ENCODE measurements at regions of chr17 and their contacts with region 1.

Region 1: DNA sequence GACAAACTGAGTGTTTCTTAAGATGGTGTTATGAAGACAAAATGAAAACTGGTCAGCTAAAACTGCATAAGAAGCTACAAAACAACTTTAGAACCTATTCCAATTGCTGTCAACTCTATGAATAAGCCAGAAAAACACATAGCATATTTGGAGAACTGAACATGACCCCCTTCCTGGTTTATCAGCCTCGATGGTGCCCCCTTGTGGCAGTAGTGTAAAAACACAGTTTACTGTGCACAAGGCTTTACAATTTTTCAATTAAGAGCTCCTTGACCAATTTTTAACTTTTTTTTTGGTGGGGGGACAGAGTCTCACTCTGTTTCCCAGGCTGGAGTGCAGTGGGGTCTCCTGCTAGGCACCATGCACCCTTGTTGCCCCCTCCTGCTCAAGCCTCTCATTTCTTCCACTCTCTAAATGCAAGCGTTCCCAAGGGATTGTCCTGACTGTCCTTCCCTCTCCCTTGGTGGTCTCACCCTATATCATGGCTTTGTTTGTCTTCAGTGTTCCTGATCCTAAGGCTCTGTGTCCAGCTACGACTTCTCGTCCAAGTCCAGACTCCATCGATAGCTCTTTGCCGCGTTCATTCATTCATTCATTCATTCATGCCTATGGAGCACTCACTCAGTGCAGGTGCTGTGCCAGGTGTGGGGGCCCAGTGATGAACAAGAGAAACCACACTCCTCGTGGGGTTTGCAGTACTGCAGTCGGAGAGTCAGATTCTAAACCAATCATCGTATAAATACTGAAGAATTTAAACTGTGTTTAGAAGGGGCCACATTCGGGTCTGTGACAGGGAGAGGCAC is 7.5 kb downstream of the EIF1 start:
- DNase-seq: peak; percentile 90 to 94
- ATAC-seq: peak; percentile 48 to 49
- H3K4me3 ChIP-seq: no peak overlapping the region
- H3K27ac ChIP-seq: no peak overlapping the region
- H3K4me1 ChIP-seq: peaks cover 24% of the 10 kb centered on the region
- CTCF ChIP-seq: peak; percentile 86
- EP300 ChIP-seq: no peak
- POLR2A ChIP-seq: no peak
- RAD21 ChIP-seq: peak; percentile 53 to 54; a peak in 4 of 5 replicates

Region 2: DNA sequence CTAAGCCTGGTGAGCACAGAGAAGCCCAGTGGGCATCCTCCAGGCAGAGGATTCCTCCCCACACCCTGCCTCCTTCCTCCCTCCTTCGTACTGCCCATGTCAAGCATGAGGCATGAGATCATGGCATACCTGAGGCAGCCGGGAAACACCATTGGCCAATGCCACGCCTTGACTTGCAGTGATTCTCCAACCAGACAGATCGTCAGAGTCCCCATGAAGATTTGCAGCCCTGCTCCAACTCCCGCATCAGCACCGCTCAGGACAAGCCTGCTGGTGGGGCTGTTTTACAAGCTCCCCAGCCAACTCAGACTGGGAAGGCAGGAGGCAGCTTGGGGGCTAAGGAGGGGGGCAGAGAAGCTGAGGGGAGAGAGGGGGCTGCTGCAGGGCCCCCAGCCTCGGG is 80.7 kb before region 1 on chr17:
- CTCF ChIA-PET with region 1: no interaction called
- POLR2A ChIA-PET with region 1: no interaction called
- DNase-seq: peak in 1 of 2 experiments; percentile 58
- ATAC-seq: no peak
- H3K4me3 ChIP-seq: no peak overlapping the region
- H3K27ac ChIP-seq: no peak overlapping the region
- H3K4me1 ChIP-seq: peaks cover 12% of the 10 kb centered on the region
- CTCF ChIP-seq: no peak
- EP300 ChIP-seq: no peak
- POLR2A ChIP-seq: no peak
- RAD21 ChIP-seq: no peak

Region 3: DNA sequence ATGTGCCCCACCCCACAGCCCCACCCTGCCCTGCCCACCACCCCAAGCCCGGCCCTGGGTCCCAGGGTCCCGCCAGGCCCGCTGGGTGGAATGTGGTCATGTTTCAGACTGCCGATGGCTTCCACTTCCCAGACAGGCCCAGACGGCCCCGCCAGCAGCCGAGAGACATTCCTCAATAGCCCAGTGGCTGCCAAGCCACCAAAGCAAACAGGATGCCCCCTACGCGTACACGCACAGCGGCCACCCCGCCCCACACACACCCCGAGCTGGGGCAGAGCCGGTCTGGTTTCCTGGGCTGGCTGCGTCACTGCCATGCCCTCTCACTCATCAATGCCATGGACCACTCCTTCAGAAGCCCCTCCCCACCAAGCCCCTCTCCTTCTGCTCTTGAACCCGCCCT is 70.6 kb before region 1 on chr17:
- CTCF ChIA-PET with region 1: no interaction called
- POLR2A ChIA-PET with region 1: no interaction called
- DNase-seq: peak in 1 of 2 experiments; percentile 33
- ATAC-seq: no peak
- H3K4me3 ChIP-seq: no peak overlapping the region
- H3K27ac ChIP-seq: no peak overlapping the region
- H3K4me1 ChIP-seq: peaks cover 9% of the 10 kb centered on the region; the same call in 2 of the 3 replicates
- CTCF ChIP-seq: no peak
- EP300 ChIP-seq: no peak
- POLR2A ChIP-seq: no peak
- RAD21 ChIP-seq: no peak

Region 4: DNA sequence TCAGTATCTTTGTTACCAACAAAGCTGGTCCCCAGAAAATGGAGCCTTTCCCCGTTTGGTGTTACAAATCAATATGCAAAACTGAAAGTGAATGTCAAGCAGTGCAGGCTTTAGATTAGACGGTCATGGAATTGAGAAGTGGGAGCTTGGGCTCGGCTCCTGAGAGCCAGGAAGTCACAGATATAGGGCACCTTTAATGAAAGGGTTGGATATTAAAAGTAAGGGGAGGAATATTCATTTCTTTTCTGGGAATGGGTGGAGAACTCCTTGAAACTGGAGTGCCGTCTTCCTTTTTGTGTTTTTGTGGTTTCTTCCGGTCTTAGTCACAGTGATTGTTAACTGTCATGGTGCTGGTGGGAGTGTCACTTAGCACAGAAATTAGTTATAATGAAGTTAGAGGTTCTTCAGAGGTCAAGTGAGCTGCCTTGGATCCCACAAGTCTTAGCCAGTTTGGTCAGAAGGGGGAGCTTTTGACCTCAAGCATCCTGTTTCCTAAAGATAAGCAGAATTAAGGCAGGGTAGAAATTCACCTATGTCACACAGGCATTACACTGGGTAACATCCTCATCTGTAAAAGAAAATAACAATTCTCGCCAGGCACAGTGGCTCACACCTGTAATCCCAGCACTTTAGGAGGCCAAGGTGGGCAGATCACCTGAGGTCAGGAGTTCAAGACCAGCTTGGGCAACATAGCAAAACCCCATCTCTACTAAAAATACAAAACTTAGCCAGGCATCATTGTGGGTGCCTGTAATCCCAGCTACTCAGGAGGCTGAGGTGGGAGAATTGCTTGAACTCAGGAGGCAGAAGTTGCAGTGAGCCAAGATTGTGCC is 17.0 kb before region 1 on chr17:
- CTCF ChIA-PET with region 1: interaction called, 329 read pairs
- POLR2A ChIA-PET with region 1: interaction called, 258 read pairs
- DNase-seq: peak in 1 of 2 experiments; percentile 80
- ATAC-seq: peak; percentile 35 to 47
- H3K4me3 ChIP-seq: peak overlapping the region; percentile 3; the same call in 1 of the 3 replicates
- H3K27ac ChIP-seq: peak overlapping the region; percentile 73 to 83
- H3K4me1 ChIP-seq: peaks cover 48% of the 10 kb centered on the region
- CTCF ChIP-seq: peak; percentile 42
- EP300 ChIP-seq: no peak
- POLR2A ChIP-seq: no peak
- RAD21 ChIP-seq: peak in 1 of 2 experiments; percentile 38; a peak in 3 of 5 replicates

Region 5: DNA sequence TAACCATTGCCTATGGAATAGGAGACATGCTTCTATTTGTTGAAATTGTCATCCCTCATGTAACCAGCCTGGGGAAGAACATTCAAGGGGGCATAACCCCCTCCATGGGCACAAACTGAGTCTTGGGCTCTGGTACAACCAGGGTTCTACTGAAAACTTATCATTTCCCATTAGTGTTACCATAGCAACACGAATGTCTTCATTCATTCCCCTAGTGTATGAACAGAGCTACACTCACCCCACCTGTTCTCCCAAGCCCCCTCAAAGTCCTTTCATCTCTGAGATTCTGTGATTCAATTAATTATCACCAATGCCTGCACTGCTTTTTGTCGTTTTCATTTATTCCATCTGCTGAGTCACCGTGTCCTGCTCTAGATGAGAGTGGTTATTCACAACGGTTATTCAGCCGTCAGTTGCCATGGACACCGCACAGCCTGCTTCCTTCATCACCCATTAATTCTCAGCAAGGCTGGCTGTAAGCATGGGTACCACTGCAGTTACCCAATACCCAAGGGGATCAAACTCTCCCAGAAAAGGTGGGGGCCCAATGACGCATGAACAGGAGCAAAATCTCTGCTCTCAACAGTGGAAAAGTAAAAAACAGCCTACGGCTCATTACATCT is 14.4 kb after region 1 on chr17:
- CTCF ChIA-PET with region 1: interaction called, 210 read pairs
- POLR2A ChIA-PET with region 1: interaction called, 9 read pairs
- DNase-seq: peak in 1 of 2 experiments; percentile 62
- ATAC-seq: peak; percentile 20 to 27; a peak in 2 of 6 replicates
- H3K4me3 ChIP-seq: no peak overlapping the region
- H3K27ac ChIP-seq: no peak overlapping the region
- H3K4me1 ChIP-seq: peaks cover 5% of the 10 kb centered on the region
- CTCF ChIP-seq: no peak
- EP300 ChIP-seq: no peak
- POLR2A ChIP-seq: no peak
- RAD21 ChIP-seq: no peak

Region 6: GRCh38 chr17:41724476-41725050 is 28.4 kb after region 1 on chr17:
- CTCF ChIA-PET with region 1: interaction called, 37 read pairs
- POLR2A ChIA-PET with region 1: no interaction called
- DNase-seq: no peak
- ATAC-seq: no peak
- H3K4me3 ChIP-seq: no peak overlapping the region
- H3K27ac ChIP-seq: no peak overlapping the region
- H3K4me1 ChIP-seq: no peaks in the 10 kb centered on the region
- CTCF ChIP-seq: no peak
- EP300 ChIP-seq: no peak
- POLR2A ChIP-seq: no peak
- RAD21 ChIP-seq: no peak

Region 7: DNA sequence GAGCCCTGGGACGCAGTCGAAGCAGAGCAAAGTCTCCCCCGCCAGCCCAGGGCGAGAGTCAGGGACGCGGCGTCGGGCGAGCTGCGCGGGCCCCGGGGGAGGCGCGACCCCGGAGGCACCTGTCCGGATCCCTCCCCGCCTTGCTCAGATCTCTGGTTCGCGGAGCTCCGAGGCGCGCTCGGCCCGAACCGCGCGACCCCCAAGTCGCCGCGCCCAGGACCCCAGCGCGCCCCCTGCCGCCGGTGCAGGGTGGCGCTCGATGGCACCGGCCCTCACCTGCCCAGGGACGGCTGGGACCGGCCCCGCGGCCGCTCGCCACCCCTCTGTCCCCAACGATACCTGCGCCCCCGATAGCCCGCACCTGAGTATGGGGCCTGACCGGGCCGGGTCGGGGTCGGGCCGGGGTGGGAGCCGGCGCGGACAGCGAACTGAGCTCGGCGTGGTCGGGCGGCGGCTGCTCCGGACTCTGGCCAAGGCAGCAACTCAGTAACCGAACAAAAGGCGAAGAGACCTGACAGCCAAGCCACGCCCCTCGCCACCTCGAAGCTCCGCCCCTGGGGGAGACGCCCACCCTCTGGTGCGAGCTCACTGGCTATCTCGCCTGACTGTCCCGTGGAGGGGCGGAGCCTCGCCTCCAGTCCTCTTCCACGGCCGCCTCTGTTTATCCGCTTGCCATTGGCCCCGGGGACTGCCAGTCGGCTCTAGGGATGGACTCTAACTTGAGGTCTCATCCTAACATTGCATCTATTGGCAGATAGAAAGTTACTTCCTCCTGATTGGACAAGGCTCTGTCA is 90.3 kb after region 1 on chr17 and contains the start of gene JUP:
- CTCF ChIA-PET with region 1: interaction called, 10 read pairs
- POLR2A ChIA-PET with region 1: no interaction called
- DNase-seq: peak; percentile 100
- ATAC-seq: peak; percentile 90 to 95
- H3K4me3 ChIP-seq: peak within 1 kb of the TSS; percentile 83
- H3K27ac ChIP-seq: peak within 1 kb of the TSS; percentile 86
- H3K4me1 ChIP-seq: peaks cover 43% of the 10 kb centered on the region
- CTCF ChIP-seq: peak; percentile 96
- EP300 ChIP-seq: no peak; a peak in 1 of 5 replicates
- POLR2A ChIP-seq: peak; percentile 85
- RAD21 ChIP-seq: peak; percentile 42 to 70; a peak in 4 of 5 replicates
- polyA plus RNA-seq, gene JUP: 54.8 and 110 TPM in 2 replicates

Region 8: DNA sequence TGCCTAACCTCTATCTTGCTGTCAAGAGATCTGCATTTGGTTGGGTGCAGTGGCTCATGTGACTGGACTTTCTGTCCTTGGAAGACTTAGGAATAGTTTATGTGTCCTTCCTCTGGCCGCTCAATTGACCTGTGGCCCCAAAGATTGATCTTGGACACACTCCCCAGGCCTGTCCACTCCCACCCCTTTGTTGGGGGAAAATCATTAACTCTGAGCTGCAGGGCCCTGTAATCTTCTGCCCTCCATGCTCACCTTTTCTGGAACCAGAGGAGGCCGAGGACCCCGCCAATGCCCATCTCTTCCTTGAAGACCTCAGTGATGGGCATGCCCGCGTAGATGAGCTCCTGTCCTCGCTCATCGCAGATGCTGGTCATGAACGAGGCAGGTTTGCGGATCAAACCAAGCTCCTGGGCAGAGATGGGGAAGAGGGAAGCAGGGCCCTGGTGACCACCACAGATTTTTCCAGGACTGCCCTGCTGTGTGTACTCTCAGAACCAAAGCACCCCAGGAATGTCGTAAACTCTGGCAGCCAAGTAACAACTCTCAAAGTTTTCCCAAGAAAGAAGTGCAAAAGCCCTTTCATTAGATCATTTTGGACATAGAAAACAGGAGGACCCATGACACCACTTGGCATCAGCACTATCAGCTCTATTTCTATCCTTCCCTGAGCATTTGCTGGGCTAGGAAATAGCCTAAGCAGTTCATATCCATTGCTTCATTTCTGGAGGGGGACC is 177.6 kb after region 1 on chr17:
- CTCF ChIA-PET with region 1: no interaction called
- POLR2A ChIA-PET with region 1: no interaction called
- DNase-seq: no peak
- ATAC-seq: no peak
- H3K4me3 ChIP-seq: no peak overlapping the region
- H3K27ac ChIP-seq: no peak overlapping the region
- H3K4me1 ChIP-seq: peaks cover 11% of the 10 kb centered on the region; the same call in 2 of the 3 replicates
- CTCF ChIP-seq: no peak
- EP300 ChIP-seq: no peak
- POLR2A ChIP-seq: no peak
- RAD21 ChIP-seq: no peak